ENCODE measurements at regions of chr13 and their contacts with region 1.

Region 1: DNA sequence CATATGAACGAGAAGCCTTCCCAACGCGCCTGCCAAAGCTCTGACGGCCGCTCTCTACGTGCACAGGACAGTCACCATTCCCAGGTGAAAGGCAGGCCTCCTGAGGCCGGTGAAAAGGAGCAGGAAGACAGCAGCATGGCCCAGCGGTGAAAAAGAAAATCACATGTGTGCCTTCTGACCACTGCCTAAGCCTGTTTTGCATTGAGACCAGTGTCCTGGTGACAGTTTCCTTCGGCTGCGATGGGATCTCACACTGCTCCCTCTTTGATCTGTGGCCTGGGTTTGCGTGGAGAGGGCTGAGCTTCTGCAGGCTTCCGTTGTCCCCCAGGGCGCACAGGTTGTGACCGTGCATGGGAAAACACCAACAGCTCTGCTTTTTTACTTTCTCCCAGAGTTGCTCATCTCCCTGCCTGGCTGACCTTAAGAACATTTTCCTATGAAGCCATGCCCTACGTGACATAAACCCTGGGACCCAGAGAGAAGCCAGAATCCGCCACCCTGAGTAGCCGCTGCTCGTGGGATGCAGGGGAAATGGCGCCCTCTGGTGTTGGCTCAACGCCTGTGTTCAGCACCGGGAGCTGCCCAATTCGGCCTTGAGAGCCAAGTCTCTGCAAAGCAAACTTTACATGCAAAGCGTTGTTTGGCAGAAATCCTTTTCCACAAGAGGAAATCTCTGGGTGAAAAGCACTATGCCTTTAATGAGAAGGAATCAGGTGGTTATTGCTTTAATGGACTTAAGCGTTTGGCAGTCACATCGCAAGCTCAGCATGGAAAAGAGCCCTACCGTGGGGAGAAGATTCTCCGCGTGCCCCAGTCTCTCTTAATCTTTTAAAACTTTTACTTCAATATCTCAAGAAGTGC is 112.2 kb upstream of the GPR12 start:
- DNase-seq: peak; percentile 80
- ATAC-seq: peak; percentile 65
- H3K4me3 Mint-ChIP-seq: no peak overlapping the region
- H3K27ac Mint-ChIP-seq: no peak overlapping the region
- H3K4me1 Mint-ChIP-seq: no peaks in the 10 kb centered on the region
- H3K27me3 Mint-ChIP-seq: no peaks in the 10 kb centered on the region
- CTCF ChIP-seq: peak; percentile 72

Region 2: GRCh38 chr13:26425443-26426358 is 447.1 kb before region 1 on chr13:
- CTCF ChIA-PET with region 1: no interaction called
- POLR2A ChIA-PET with region 1: no interaction called
- intact Hi-C with region 1: no loop called
- DNase-seq: no peak
- ATAC-seq: no peak
- H3K4me3 Mint-ChIP-seq: no peak overlapping the region
- H3K27ac Mint-ChIP-seq: no peak overlapping the region
- H3K4me1 Mint-ChIP-seq: no peaks in the 10 kb centered on the region
- H3K27me3 Mint-ChIP-seq: no peaks in the 10 kb centered on the region
- CTCF ChIP-seq: no peak

Region 3: DNA sequence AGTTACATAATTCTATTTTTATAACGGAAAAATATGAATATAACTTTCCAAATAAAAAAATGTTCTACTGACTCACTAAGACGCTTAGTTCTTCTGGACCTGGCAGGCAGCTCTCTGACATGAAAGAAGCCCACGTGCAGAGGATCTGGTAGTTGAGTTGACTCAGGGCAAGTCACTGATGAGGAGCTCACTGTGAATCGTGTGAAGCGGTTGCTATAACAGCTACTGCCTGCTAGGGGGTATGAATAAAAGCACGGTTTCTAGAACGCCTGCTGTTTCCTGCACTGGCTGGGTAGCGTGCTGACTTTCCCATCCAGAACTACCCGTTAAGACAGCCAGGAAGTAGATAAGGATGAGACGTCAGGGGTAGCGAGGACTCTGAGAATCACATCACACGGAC is 369.9 kb before region 1 on chr13:
- CTCF ChIA-PET with region 1: no interaction called
- POLR2A ChIA-PET with region 1: no interaction called
- intact Hi-C with region 1: no loop called
- DNase-seq: peak; percentile 52
- ATAC-seq: peak; percentile 93
- H3K4me3 Mint-ChIP-seq: no peak overlapping the region
- H3K27ac Mint-ChIP-seq: no peak overlapping the region
- H3K4me1 Mint-ChIP-seq: peaks cover 13% of the 10 kb centered on the region
- H3K27me3 Mint-ChIP-seq: peaks cover under 1% of the 10 kb centered on the region
- CTCF ChIP-seq: peak; percentile 32

Region 4: GRCh38 chr13:26707122-26708006 is 165.4 kb before region 1 on chr13:
- CTCF ChIA-PET with region 1: interaction called, 38 read pairs
- POLR2A ChIA-PET with region 1: no interaction called
- intact Hi-C with region 1: loop called (anchors 5 kb)
- DNase-seq: peak; percentile 69
- ATAC-seq: peak; percentile 89
- H3K4me3 Mint-ChIP-seq: no peak overlapping the region
- H3K27ac Mint-ChIP-seq: no peak overlapping the region
- H3K4me1 Mint-ChIP-seq: peaks cover 7% of the 10 kb centered on the region
- H3K27me3 Mint-ChIP-seq: no peaks in the 10 kb centered on the region
- CTCF ChIP-seq: peak; percentile 69

Region 5: GRCh38 chr13:26853323-26853722 is 19.4 kb before region 1 on chr13:
- CTCF ChIA-PET with region 1: interaction called, 18 read pairs
- POLR2A ChIA-PET with region 1: no interaction called
- intact Hi-C with region 1: no loop called
- DNase-seq: no peak
- ATAC-seq: no peak
- H3K4me3 Mint-ChIP-seq: no peak overlapping the region
- H3K27ac Mint-ChIP-seq: no peak overlapping the region
- H3K4me1 Mint-ChIP-seq: no peaks in the 10 kb centered on the region
- H3K27me3 Mint-ChIP-seq: peaks cover 15% of the 10 kb centered on the region
- CTCF ChIP-seq: no peak

Region 6: GRCh38 chr13:26887594-26887993 is 14.8 kb after region 1 on chr13:
- CTCF ChIA-PET with region 1: interaction called, 37 read pairs
- POLR2A ChIA-PET with region 1: no interaction called
- intact Hi-C with region 1: no loop called
- DNase-seq: no peak
- ATAC-seq: no peak
- H3K4me3 Mint-ChIP-seq: no peak overlapping the region
- H3K27ac Mint-ChIP-seq: no peak overlapping the region
- H3K4me1 Mint-ChIP-seq: no peaks in the 10 kb centered on the region
- H3K27me3 Mint-ChIP-seq: peaks cover 10% of the 10 kb centered on the region
- CTCF ChIP-seq: no peak

Region 7: DNA sequence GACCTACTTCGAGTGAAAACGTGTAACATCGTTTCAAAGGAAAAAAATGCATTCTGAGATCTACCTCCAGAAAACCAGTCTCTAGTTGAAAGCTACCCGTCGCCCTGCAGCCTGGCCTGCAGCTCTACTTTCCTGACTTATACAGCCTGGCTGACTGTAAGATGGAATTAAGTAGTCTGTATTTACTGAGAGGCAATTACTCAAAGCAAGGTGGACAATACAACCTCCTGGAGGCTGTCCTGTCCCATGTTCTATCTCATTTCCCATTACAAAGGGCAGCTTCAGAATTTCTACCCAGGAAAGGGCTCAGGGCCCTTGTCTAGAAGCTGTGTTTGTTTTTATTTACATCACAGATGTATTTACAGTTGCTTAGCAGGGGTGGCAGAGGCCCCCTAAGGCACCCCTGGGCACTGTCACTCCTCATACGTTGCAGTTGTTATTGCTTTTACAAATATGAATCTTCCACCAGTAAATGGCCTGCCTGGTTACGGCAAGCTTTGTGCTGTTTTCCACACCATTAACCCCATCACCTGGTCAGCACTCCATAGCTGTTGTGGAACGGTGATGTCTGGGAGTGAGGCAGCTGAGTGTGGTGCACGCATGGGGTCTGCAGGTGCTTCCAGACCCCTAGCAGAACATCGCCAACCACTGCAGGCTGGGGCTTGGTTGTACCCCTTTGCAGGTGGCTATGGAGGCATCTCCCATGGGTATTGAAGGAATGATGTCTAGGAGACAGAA is 624.0 kb after region 1 on chr13:
- CTCF ChIA-PET with region 1: no interaction called
- POLR2A ChIA-PET with region 1: no interaction called
- intact Hi-C with region 1: no loop called
- DNase-seq: no peak
- ATAC-seq: no peak
- H3K4me3 Mint-ChIP-seq: no peak overlapping the region
- H3K27ac Mint-ChIP-seq: no peak overlapping the region
- H3K4me1 Mint-ChIP-seq: no peaks in the 10 kb centered on the region
- H3K27me3 Mint-ChIP-seq: no peaks in the 10 kb centered on the region
- CTCF ChIP-seq: no peak